ENCODE measurements at regions of chr1 and their contacts with region 1.

Region 1: DNA sequence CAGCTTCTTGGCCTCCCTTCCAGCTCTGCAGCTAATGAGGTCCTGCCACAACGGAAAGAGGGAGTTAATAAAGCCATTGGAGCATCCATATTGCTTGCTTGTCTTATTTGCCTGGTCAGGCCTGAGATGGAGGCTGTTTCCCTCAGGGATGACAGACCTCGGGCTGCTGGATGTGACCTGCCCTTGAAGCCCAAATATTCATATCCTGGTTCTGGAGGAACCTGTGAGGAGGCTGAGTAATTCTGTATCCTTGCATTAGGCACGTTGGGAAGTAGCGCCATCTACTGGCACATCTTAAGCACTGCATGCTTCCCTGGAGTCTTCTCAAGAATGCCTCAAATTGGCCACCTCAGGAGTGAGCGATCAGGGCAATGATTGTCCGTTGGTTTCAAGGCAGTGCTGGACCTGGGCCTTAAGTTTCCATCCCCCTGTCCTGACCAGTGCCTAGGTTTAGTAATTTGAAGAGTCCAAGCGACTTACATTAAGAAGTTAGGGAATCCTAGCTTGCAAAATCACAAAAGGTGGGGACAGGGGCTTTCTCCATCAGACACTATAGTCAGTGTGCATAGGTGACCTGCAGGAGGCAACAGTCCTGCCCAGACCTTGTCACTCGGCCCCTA is 13.8 kb upstream of the NASP start:
- DNase-seq: peak; percentile 55 to 84
- H3K4me3 ChIP-seq: no peak overlapping the region
- H3K27ac ChIP-seq: no peak overlapping the region
- H3K4me1 ChIP-seq: no peaks in the 10 kb centered on the region
- H3K27me3 ChIP-seq: no peaks in the 10 kb centered on the region
- CTCF ChIP-seq: peak; percentile 91 to 98

Region 2: GRCh38 chr1:45339789-45340570 is 230.1 kb before region 1 on chr1 and contains the starts of genes MUTYH and TOE1:
- intact Hi-C with region 1: loop called (anchors 10 kb)
- DNase-seq: peak; percentile 89 to 94
- H3K4me3 ChIP-seq: peak within 1 kb of the TSS; percentile 79 to 82
- H3K27ac ChIP-seq: peak within 1 kb of the TSS; percentile 96
- H3K4me1 ChIP-seq: peaks cover 0 to 28% (median 24%) of the 10 kb centered on the region in 4 donors
- H3K27me3 ChIP-seq: no peaks in the 10 kb centered on the region
- CTCF ChIP-seq: peak in 1 of 2 experiments; percentile 4

Region 3: DNA sequence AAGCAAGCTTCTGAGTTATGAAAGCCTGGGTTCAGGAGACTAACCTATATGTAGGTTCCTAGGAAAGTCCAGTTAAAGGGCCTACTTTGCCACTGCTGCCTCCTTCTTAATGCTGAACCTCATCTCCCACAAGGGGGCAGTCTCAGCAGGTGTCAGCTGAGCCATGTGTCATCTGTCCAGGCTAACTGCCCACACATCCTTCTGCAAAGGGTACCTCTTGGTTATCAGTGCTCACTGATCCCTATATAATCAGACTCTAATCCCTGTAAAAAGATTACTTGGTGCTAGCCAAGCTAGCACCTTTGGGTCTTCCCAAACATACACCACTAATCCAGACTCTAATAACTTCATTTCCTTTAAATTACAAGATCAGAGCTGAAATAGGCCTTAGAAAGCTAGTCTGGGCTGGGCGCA is 57.4 kb before region 1 on chr1:
- intact Hi-C with region 1: loop called (anchors 2 kb)
- DNase-seq: peak; percentile 55 to 71
- H3K4me3 ChIP-seq: no peak overlapping the region
- H3K27ac ChIP-seq: no peak overlapping the region
- H3K4me1 ChIP-seq: peaks cover 0 to 14% (median 3%) of the 10 kb centered on the region in 4 donors
- H3K27me3 ChIP-seq: no peaks in the 10 kb centered on the region
- CTCF ChIP-seq: peak; percentile 45 to 68

Region 4: DNA sequence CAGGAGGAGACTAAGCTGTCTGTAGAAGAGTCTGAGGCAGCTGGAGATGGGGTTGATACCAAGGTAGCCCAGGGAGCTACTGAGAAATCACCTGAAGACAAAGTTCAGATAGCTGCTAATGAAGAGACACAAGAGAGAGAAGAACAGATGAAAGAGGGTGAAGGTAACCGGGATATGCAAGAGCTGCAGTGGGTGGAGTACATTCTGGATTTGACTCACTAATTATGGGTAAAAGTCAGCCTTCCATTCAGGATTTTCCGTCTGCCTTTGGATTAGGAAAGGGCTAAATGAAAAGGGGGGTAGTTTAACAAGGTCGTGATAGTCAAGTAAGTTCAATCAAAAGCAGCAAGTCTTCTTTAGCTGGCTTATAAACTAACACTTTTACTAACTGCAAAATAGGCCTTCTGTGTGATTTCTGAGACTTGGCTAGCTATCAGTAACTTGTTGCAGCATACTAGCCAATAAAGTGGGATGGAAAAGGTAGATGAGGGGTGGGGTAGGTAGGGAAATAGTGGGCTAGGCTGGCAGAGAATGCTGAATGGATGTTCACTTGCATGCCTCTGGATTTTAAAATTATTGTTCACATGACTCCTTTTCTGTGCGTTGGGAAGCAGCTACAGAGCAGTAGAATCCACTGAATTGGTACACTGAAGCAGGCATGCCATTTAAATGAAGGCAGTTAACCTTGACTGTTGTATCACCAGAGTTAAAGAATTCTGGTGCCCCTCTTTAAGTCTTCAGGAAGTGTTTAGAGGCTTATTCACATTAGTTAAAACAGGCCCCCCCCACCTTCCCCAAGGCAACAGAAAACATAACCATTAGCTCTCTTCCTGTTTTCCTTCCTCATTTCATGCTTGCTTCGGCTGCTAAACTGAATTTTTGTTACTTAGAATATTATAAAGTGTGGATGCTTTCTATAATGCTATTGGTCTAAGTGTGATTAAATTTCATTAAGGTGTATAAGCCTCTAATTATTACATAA is 38.4 kb after region 1 on chr1:
- intact Hi-C with region 1: no loop called
- DNase-seq: no peak
- H3K4me3 ChIP-seq: no peak overlapping the region
- H3K27ac ChIP-seq: no peak overlapping the region
- H3K4me1 ChIP-seq: no peaks in the 10 kb centered on the region
- H3K27me3 ChIP-seq: no peaks in the 10 kb centered on the region
- CTCF ChIP-seq: no peak

Measured in tibial artery (tissue), 4 donors.